ENCODE measurements at regions of chr9 and their contacts with region 1.

Region 1: DNA sequence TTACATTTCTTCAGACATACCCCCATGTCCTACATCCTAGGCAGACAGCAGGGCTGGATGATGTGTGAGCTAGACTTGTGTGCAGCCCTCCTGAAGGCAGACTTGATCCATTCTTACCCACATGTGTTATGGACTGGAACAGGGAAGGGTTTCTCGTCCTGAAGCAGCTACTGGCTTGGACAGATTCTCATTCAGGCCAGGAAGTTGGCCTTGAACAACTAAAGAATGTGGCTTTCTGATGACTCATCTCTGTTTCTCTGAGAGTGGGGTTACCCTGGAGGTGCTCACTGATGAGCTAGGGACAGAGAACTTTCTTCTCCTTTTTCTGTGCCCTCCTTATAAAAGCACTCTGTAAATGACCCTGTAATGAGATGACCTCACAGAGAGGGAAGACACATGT is 246.5 kb downstream of the PCSK5 start:
- DNase-seq: no peak
- ATAC-seq: peak in 1 of 8 donors; percentile 33
- H3K4me3 ChIP-seq: no peak overlapping the region
- H3K27ac ChIP-seq: no peak overlapping the region
- H3K4me1 ChIP-seq: peaks cover 0 to 4% (median 0%) of the 10 kb centered on the region in 9 donors
- H3K27me3 ChIP-seq: no peaks in the 10 kb centered on the region
- CTCF ChIP-seq: no peak

Region 2: DNA sequence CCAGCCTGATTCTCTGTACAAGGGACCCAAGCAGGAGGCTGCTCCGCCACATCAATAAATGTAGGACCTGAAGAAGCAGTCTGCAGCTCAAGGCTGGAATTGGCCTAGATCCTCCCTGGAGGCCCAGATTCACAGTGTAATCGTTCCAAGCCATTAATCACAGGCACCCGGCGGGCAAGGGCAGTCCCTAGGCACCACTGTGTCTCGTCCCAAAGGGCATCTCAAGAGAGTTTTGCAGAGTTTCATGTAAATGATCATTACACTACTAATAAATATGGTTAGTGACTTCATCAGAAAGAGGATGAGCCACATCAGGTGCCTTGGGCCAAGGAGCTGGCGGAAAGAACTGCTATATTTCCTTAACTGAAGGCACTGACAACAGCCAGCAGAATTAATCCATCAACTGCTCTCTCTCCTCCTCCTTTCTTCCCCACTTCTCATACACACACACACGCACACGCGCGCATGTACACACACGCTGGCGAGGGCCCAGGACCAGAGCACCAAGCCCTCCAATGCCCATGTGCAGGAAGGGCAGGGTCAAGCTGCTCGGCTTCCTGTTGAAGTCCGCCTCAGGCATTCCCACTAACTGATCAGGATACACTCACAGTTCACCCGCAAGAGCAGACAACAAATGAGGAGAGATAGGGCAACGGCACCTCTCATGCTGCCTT is 1860.8 kb after region 1 on chr9:
- intact Hi-C with region 1: loop called in 1 of 10 experiments (anchors 10 kb)
- DNase-seq: peak in 1 of 2 donors; percentile 52
- ATAC-seq: peak in 7 of 8 donors; percentile 47 to 80 (median 70)
- H3K4me3 ChIP-seq: no peak overlapping the region
- H3K27ac ChIP-seq: peak overlapping the region in 3 of 10 donors; percentile 10 to 78 (median 76)
- H3K4me1 ChIP-seq: peaks cover 0 to 63% (median 30%) of the 10 kb centered on the region in 9 donors
- H3K27me3 ChIP-seq: no peaks in the 10 kb centered on the region
- CTCF ChIP-seq: no peak

Measured in heart right ventricle (tissue), 16 donors.